ENCODE measurements at regions of chr5 and their contacts with region 1.

Region 1: GRCh38 chr5:168409580-168410458 is 76.5 kb upstream of the RARS1 start:
- DNase-seq: peak; percentile 83
- H3K4me3 Mint-ChIP-seq: peak overlapping the region; percentile 28
- H3K27ac Mint-ChIP-seq: peak overlapping the region; percentile 78
- H3K4me1 Mint-ChIP-seq: peaks cover 49% of the 10 kb centered on the region
- H3K27me3 Mint-ChIP-seq: no peaks in the 10 kb centered on the region
- CTCF ChIP-seq: no peak

Region 2: DNA sequence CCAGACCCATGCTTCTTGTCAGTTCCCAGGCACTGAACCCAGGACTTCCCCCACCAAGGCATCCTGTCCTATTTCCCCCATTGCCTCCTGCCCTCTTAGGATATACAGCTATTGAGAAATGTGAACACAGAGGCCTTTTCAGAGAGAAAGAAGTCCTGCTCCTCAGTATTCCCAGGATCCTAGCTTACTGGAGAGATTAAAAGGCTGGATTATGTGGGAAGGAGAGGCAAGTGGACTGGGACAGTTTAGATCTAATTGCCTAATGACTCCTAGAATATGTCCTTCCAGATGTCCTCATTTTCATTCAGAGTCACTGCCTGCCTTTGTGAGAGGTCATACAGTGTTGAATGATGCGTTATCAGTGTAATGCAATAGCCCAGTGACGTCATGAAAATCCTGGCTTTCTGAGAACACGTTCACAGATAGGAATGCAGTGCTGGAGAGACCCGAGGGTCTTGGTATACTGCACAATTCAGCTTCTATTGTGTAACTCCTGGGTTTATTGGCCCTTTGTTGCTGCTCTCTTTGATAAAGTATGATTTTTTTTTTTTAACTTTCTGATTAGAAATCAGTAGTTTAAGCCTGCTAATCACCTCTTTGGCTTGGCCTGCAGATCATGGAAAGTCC is 92.2 kb before region 1 on chr5:
- CTCF ChIA-PET with region 1: interaction called, 12 read pairs
- POLR2A ChIA-PET with region 1: no interaction called
- intact Hi-C with region 1: no loop called
- DNase-seq: peak; percentile 93
- H3K4me3 Mint-ChIP-seq: no peak overlapping the region
- H3K27ac Mint-ChIP-seq: peak overlapping the region; percentile 20
- H3K4me1 Mint-ChIP-seq: peaks cover 38% of the 10 kb centered on the region
- H3K27me3 Mint-ChIP-seq: no peaks in the 10 kb centered on the region
- CTCF ChIP-seq: no peak

Region 3: GRCh38 chr5:168328814-168329213 is 81.0 kb before region 1 on chr5:
- CTCF ChIA-PET with region 1: interaction called, 4 read pairs
- POLR2A ChIA-PET with region 1: interaction called, 14 read pairs
- intact Hi-C with region 1: no loop called
- DNase-seq: no peak
- H3K4me3 Mint-ChIP-seq: no peak overlapping the region
- H3K27ac Mint-ChIP-seq: no peak overlapping the region
- H3K4me1 Mint-ChIP-seq: peaks cover 29% of the 10 kb centered on the region
- H3K27me3 Mint-ChIP-seq: no peaks in the 10 kb centered on the region
- CTCF ChIP-seq: no peak

Region 4: GRCh38 chr5:168390491-168390890 is 19.3 kb before region 1 on chr5:
- CTCF ChIA-PET with region 1: interaction called, 10 read pairs
- POLR2A ChIA-PET with region 1: interaction called, 6 read pairs
- intact Hi-C with region 1: no loop called
- DNase-seq: peak; percentile 28
- H3K4me3 Mint-ChIP-seq: no peak overlapping the region
- H3K27ac Mint-ChIP-seq: peak overlapping the region; percentile 66
- H3K4me1 Mint-ChIP-seq: peaks cover 7% of the 10 kb centered on the region
- H3K27me3 Mint-ChIP-seq: no peaks in the 10 kb centered on the region
- CTCF ChIP-seq: no peak

Measured in MCF 10A (cell line).